ENCODE measurements at regions of chr7 and their contacts with region 1.

Region 1: DNA sequence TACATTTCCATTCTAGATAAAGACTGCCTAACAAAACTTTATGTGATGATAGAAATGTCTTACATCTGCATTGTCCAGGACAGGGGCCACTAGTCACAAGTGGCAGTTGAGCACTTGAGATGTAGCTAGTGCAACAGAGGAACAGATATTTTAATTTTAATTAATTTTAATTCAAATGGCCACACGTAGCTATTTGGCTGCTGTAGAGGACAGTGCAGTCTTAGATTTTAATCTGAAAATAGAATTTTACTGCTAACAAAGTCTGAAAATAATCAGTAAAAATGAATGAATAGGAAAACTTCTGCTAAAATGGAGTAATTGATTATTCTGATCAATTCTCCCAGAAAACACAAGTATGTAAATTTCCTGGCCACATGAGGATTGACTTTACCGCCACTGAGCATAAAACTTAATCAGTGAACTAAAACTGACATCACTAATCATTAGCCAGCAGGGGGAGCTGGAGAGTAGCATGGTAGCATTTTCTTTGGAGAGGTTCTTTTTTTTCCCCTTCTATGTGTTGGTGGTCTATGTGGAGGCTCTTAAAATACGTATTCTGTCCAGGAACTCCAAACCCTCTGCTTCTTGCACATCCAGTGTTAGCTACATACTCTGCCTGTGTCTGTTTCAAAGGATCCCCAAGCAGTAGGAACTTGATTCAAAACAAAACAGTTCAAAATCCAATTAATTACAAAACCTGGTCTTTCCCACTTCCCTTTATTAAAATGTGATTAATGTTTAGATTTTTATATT is 52.1 kb downstream of the TSPAN12 start:
- DNase-seq: peak; percentile 62
- H3K4me3 ChIP-seq: no peak overlapping the region
- H3K27ac ChIP-seq: no peak overlapping the region
- H3K4me1 ChIP-seq: no peaks in the 10 kb centered on the region
- H3K27me3 ChIP-seq: no peaks in the 10 kb centered on the region

Region 2: GRCh38 chr7:120603366-120603765 is 202.4 kb before region 1 on chr7:
- in situ Hi-C with region 1: no loop called
- DNase-seq: no peak
- H3K4me3 ChIP-seq: no peak overlapping the region
- H3K27ac ChIP-seq: no peak overlapping the region
- H3K4me1 ChIP-seq: no peaks in the 10 kb centered on the region
- H3K27me3 ChIP-seq: no peaks in the 10 kb centered on the region

Region 3: GRCh38 chr7:120933475-120933874 is 127.7 kb after region 1 on chr7:
- in situ Hi-C with region 1: loop called (anchors 10 kb)
- DNase-seq: no peak
- H3K4me3 ChIP-seq: no peak overlapping the region
- H3K27ac ChIP-seq: no peak overlapping the region
- H3K4me1 ChIP-seq: no peaks in the 10 kb centered on the region; the same call in 1 of the 2 replicates
- H3K27me3 ChIP-seq: no peaks in the 10 kb centered on the region

Region 4: GRCh38 chr7:121049028-121049791 is 243.4 kb after region 1 on chr7:
- in situ Hi-C with region 1: no loop called
- DNase-seq: no peak
- H3K4me3 ChIP-seq: no peak overlapping the region
- H3K27ac ChIP-seq: no peak overlapping the region
- H3K4me1 ChIP-seq: peaks cover 10% of the 10 kb centered on the region; the same call in 1 of the 2 replicates
- H3K27me3 ChIP-seq: no peaks in the 10 kb centered on the region

Region 5: GRCh38 chr7:121107923-121108498 is 302.2 kb after region 1 on chr7:
- in situ Hi-C with region 1: loop called (anchors 25 kb)
- DNase-seq: peak; percentile 81
- H3K4me3 ChIP-seq: no peak overlapping the region
- H3K27ac ChIP-seq: no peak overlapping the region
- H3K4me1 ChIP-seq: peaks cover 10% of the 10 kb centered on the region; the same call in 1 of the 2 replicates
- H3K27me3 ChIP-seq: no peaks in the 10 kb centered on the region